PC-3 (cell line): ENCODE measurements at regions of chr3 and their contacts with region 1.

Region 1: DNA sequence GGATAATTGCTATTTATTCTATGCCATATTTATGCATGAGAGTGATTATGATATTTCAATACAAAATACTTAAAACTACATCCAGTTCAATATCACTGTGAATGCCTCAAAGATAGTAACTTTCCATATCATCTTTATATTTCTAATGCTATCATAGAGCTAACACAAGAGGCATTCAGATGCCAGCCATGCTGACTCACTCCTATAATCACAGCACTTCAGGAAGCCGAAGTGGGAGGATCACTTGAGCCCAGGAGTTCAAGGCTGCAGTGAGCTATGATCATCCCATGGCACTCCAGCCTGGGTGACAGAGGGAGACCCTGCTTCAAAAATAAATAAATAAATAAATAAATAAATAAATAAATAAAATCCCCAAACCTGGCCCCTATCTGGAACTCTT is 498.7 kb downstream of the EPHA3 start:
- DNase-seq: peak; percentile 39
- ATAC-seq: no peak; the same call in 1 of the 2 replicates
- H3K4me3 ChIP-seq: no peak overlapping the region
- H3K27ac ChIP-seq: no peak overlapping the region
- H3K4me1 ChIP-seq: 0 out of 2 replicates have a peak, but pooled peaks cover 3% of the 10 kb centered on the region
- H3K27me3 ChIP-seq: peaks cover 11% of the 10 kb centered on the region; the same call in 1 of the 2 replicates
- CTCF ChIP-seq: no peak

Region 2: GRCh38 chr3:89571707-89572106 is 34.4 kb before region 1 on chr3:
- CTCF ChIA-PET with region 1: no interaction called
- POLR2A ChIA-PET with region 1: no interaction called
- intact Hi-C with region 1: no loop called
- DNase-seq: no peak
- ATAC-seq: no peak
- H3K4me3 ChIP-seq: no peak overlapping the region
- H3K27ac ChIP-seq: no peak overlapping the region
- H3K4me1 ChIP-seq: peaks cover 12% of the 10 kb centered on the region
- H3K27me3 ChIP-seq: no peaks in the 10 kb centered on the region
- CTCF ChIP-seq: no peak

Region 3: GRCh38 chr3:89617706-89618105 is 11.6 kb after region 1 on chr3:
- CTCF ChIA-PET with region 1: no interaction called
- POLR2A ChIA-PET with region 1: no interaction called
- intact Hi-C with region 1: no loop called
- DNase-seq: no peak
- ATAC-seq: no peak
- H3K4me3 ChIP-seq: no peak overlapping the region
- H3K27ac ChIP-seq: no peak overlapping the region
- H3K4me1 ChIP-seq: no peaks in the 10 kb centered on the region
- H3K27me3 ChIP-seq: 0 out of 2 replicates have a peak, but pooled peaks cover 22% of the 10 kb centered on the region
- CTCF ChIP-seq: no peak

Region 4: DNA sequence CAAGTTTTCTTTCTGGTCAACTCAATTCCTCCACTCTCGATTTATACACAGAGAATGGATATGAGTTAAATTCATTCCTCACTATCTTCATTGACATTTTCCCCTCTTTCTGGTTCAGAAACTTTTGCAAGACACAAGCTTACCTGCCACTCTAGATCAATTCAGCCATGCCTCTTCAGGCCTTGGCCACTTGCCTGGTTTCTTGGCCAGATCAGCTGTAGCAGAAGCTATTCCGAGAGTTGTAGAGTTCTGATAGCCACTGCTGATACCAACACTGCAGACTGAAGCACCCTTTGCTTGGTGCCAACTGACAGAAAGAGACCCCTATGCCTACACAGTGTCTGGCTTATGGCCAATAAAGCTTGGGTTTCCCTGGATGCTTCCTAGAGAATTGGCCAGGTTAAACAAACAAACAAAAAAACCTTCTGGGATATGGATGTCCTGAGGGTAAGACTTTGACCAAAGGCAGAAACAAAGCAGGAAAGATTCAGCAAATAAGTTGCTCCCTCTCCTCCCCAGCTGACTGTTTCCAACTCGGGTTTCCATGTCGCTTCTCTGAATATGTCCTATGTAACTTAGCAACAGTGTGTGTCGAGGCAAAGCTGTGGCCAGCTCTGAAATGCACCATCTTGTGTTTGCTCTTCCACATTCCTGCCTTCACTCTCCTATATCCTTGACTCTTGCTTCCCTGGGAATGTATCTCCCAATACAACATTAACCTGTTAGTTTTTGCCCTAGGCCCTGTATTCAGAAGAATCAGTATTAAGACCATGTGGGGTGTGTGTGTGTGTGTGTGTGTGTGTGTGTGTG is 22.9 kb after region 1 on chr3:
- CTCF ChIA-PET with region 1: no interaction called
- POLR2A ChIA-PET with region 1: no interaction called
- intact Hi-C with region 1: no loop called
- DNase-seq: no peak
- ATAC-seq: no peak
- H3K4me3 ChIP-seq: no peak overlapping the region
- H3K27ac ChIP-seq: no peak overlapping the region
- H3K4me1 ChIP-seq: no peaks in the 10 kb centered on the region
- H3K27me3 ChIP-seq: peaks cover 27% of the 10 kb centered on the region
- CTCF ChIP-seq: no peak

Region 5: GRCh38 chr3:89644716-89645115 is 38.6 kb after region 1 on chr3:
- CTCF ChIA-PET with region 1: no interaction called
- POLR2A ChIA-PET with region 1: no interaction called
- intact Hi-C with region 1: loop called (anchors 2 kb)
- DNase-seq: no peak
- ATAC-seq: no peak
- H3K4me3 ChIP-seq: no peak overlapping the region
- H3K27ac ChIP-seq: no peak overlapping the region
- H3K4me1 ChIP-seq: no peaks in the 10 kb centered on the region
- H3K27me3 ChIP-seq: no peaks in the 10 kb centered on the region
- CTCF ChIP-seq: no peak

Region 6: DNA sequence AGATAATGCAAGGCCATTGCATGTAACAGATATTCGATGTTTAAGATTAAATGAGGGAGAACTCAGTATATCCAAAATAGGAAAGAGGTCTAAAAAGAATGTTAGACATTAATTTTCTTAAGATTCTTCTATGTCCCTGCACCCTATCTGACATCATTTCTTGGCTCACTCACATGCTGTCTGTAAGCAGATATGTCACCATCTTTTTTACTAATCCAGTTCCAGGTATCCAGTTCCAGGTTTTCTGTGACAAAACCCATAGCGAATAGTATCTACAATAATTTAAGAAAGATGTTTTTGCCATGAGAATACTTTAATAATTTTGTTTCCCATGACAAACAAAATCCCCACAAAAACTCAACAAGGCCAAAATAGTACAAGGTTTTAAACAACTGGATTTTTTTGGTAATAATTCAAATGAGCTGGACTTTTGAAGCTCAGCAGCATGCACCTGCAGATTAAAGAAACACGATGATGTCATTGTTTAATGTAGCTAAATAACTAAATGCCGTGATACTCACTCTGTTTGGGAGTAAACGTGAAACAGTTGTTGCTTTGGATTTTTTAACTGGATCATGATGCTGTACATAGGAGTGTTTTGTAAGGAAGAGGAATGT is 368.9 kb after region 1 on chr3:
- CTCF ChIA-PET with region 1: no interaction called
- POLR2A ChIA-PET with region 1: no interaction called
- intact Hi-C with region 1: no loop called
- DNase-seq: no peak
- ATAC-seq: no peak
- H3K4me3 ChIP-seq: no peak overlapping the region
- H3K27ac ChIP-seq: no peak overlapping the region
- H3K4me1 ChIP-seq: no peaks in the 10 kb centered on the region
- H3K27me3 ChIP-seq: no peaks in the 10 kb centered on the region
- CTCF ChIP-seq: no peak